ENCODE measurements at regions of chr2 and their contacts with region 1.

Region 1: DNA sequence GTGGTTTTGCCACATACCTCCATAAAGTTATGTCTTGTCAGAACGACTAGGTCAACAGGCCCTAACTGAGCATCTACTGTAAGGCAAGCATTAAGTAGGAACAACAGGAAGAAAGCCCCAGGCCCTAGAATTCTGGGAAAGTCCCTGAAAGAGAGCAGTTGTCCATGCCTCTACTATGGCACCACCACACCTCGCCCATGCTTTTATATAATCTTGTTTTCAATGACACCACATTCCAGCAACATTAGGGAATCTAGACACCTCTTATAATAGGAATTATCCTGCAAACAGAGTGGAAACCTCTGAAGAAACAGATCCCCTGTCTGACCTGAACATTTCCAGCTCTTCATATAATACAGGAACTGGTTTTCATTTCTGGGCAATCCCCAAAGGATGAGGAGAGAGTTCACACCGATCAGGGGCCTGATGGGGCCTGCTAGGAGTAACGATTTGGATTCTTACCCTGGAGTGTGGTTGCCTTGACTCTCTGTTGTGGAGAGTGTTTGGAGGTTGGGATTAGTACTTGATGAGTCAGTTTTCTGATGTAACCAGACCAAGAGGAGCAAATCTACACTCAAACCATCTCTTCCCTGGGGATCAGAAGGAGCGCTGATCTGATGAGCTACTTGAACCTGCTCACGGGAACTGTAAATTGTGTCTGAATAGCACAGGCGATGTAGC is 31.9 kb upstream of the CEP68 start:
- DNase-seq: no peak
- ATAC-seq: no peak
- H3K4me3 Mint-ChIP-seq: peak overlapping the region; percentile 29
- H3K27ac Mint-ChIP-seq: peak overlapping the region; percentile 63
- H3K4me1 Mint-ChIP-seq: peaks cover 58% of the 10 kb centered on the region
- H3K27me3 Mint-ChIP-seq: no peaks in the 10 kb centered on the region
- CTCF ChIP-seq: no peak

Region 2: DNA sequence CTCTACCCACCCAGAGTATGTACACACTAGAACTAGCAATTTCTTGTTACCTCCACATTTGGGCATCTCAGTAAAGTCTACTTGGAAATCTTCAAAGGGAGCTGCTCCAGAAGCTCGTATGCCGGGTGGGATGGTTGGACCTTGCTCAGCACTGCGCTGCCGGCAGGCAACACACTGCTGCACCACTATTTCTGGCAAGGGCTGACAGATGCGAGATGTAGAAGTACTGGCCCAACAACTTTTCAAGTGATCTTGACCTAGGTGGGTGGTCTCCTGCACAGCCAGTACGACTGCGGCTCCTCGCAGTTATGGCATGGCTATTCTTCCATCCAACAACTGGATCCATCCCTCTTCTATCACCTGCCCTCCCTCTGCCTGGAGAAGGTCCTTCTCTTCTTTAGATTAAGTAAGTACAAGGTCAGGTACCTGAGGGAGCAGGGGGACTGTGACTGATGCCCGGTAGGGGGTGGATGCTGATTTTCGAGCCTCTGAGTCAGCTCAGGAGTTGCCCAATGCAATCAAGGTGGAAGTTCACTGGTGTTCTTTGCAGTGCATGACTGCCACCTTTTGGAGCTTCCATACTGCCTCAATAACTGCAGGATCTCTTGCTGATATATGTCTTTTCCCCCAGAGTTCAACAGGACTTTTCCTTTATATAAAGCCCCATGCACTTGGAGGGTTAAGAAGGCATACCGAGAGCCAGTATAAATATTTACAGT is 135.5 kb before region 1 on chr2:
- CTCF ChIA-PET with region 1: no interaction called
- POLR2A ChIA-PET with region 1: no interaction called
- intact Hi-C with region 1: no loop called
- DNase-seq: no peak
- ATAC-seq: no peak
- H3K4me3 Mint-ChIP-seq: no peak overlapping the region
- H3K27ac Mint-ChIP-seq: no peak overlapping the region
- H3K4me1 Mint-ChIP-seq: no peaks in the 10 kb centered on the region
- H3K27me3 Mint-ChIP-seq: no peaks in the 10 kb centered on the region
- CTCF ChIP-seq: no peak

Region 3: GRCh38 chr2:65056215-65057053 is 32.1 kb after region 1 on chr2 and contains the start of gene CEP68:
- CTCF ChIA-PET with region 1: no interaction called
- POLR2A ChIA-PET with region 1: interaction called, 11 read pairs
- intact Hi-C with region 1: loop called (anchors 1 kb)
- DNase-seq: peak; percentile 95
- ATAC-seq: peak; percentile 91
- H3K4me3 Mint-ChIP-seq: peak within 1 kb of the TSS; percentile 97
- H3K27ac Mint-ChIP-seq: peak within 1 kb of the TSS; percentile 95
- H3K4me1 Mint-ChIP-seq: peaks cover 75% of the 10 kb centered on the region
- H3K27me3 Mint-ChIP-seq: no peaks in the 10 kb centered on the region
- CTCF ChIP-seq: no peak
- total RNA-seq, gene CEP68: 16.6 and 17.9 TPM in 2 replicates

Region 4: DNA sequence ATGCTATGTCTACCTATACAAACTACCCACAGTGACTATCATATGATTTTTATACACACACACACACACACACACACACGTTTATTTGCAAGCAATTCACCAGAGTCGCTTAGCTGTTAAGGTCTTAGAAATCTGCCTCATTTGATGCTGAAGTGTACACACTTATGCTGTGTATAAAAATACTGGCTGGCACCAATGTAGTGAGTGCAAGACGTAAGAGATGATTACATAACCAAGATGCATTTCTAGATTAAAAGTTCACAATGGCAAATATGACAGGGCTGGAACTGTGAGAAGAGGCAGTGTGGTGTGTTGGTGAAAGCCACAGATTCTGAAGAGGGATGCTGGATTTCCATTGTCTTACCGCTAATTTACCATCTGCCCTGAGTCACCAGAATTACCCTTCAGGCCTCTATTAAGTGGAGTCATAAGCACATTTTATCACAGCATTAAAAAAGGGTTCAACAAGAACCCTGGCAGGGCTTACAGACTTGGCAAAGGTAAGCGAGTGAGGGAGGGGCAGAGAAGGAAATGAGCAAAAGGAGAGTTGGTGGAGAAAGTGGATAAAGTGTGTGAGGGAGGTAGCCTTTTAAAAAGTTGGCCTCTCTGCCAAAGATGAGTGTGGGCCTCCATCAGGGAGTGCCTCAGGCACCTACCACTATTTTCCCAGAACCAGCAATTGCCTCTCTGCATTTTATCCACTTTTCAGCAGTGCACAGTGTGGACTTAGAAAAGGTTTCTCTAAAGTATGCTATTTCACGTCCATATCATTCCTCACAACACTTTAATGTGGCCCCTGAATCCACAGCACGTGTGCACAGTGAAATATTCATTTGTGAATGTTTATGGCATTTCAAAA is 1432.1 kb after region 1 on chr2:
- CTCF ChIA-PET with region 1: no interaction called
- POLR2A ChIA-PET with region 1: no interaction called
- intact Hi-C with region 1: no loop called
- DNase-seq: no peak
- ATAC-seq: no peak
- H3K4me3 Mint-ChIP-seq: no peak overlapping the region
- H3K27ac Mint-ChIP-seq: no peak overlapping the region
- H3K4me1 Mint-ChIP-seq: no peaks in the 10 kb centered on the region
- H3K27me3 Mint-ChIP-seq: peaks cover 9% of the 10 kb centered on the region
- CTCF ChIP-seq: no peak